ENCODE measurements at regions of chr11 and their contacts with region 1.

Region 1: GRCh38 chr11:72609045-72609444 is 65.2 kb downstream of the PDE2A start:
- DNase-seq: peak; percentile 39
- ATAC-seq: peak; percentile 57
- H3K4me3 Mint-ChIP-seq: no peak overlapping the region
- H3K27ac Mint-ChIP-seq: no peak overlapping the region
- H3K4me1 Mint-ChIP-seq: peaks cover 24% of the 10 kb centered on the region
- H3K27me3 Mint-ChIP-seq: peaks cover 38% of the 10 kb centered on the region

Region 2: GRCh38 chr11:72621008-72621610 is 12.1 kb after region 1 on chr11:
- CTCF ChIA-PET with region 1: interaction called, 12 read pairs
- POLR2A ChIA-PET with region 1: no interaction called
- DNase-seq: peak; percentile 55
- ATAC-seq: peak; percentile 70
- H3K4me3 Mint-ChIP-seq: peak overlapping the region; percentile 2
- H3K27ac Mint-ChIP-seq: peak overlapping the region; percentile 73
- H3K4me1 Mint-ChIP-seq: peaks cover 53% of the 10 kb centered on the region
- H3K27me3 Mint-ChIP-seq: peaks cover 18% of the 10 kb centered on the region

Measured in activated CD8-positive, alpha-beta T cell treated with anti-CD3 and anti-CD28 coated beads, Interleukin-2, amount 10 ng/mL, durations not matched to agents 7 days and 5 days (primary cell).